H1 (cell line): ENCODE measurements at regions of chr11 and their contacts with region 1.

Region 1: GRCh38 chr11:8832571-8833260 is 78.3 kb upstream of the AKIP1 start:
- DNase-seq: no peak
- H3K4me3 ChIP-seq: no peak overlapping the region
- H3K27ac ChIP-seq: no peak overlapping the region
- H3K4me1 ChIP-seq: peaks cover 6 to 20% (median 13%) of the 10 kb centered on the region in 4 experiments; a peak in 6 of 7 replicates
- H3K27me3 ChIP-seq: no peaks in the 10 kb centered on the region
- CTCF ChIP-seq: no peak
- EP300 ChIP-seq: no peak
- POLR2A ChIP-seq: no peak
- RAD21 ChIP-seq: no peak

Region 2: GRCh38 chr11:8719211-8719649 is 113.5 kb before region 1 on chr11:
- CTCF ChIA-PET with region 1: no interaction called
- POLR2A ChIA-PET with region 1: no interaction called
- DNase-seq: no peak
- H3K4me3 ChIP-seq: no peak overlapping the region
- H3K27ac ChIP-seq: no peak overlapping the region
- H3K4me1 ChIP-seq: peaks cover 0 to 17% (median 9%) of the 10 kb centered on the region in 4 experiments; a peak in 4 of 7 replicates
- H3K27me3 ChIP-seq: no peaks in the 10 kb centered on the region
- CTCF ChIP-seq: no peak
- EP300 ChIP-seq: no peak
- POLR2A ChIP-seq: no peak
- RAD21 ChIP-seq: no peak

Region 3: GRCh38 chr11:8813658-8814057 is 19.1 kb before region 1 on chr11:
- CTCF ChIA-PET with region 1: interaction called, 28 read pairs
- POLR2A ChIA-PET with region 1: no interaction called
- DNase-seq: peak; percentile 77 to 88
- H3K4me3 ChIP-seq: no peak overlapping the region
- H3K27ac ChIP-seq: no peak overlapping the region
- H3K4me1 ChIP-seq: peaks cover 13 to 28% (median 22%) of the 10 kb centered on the region in 4 experiments; a peak in 6 of 7 replicates
- H3K27me3 ChIP-seq: no peaks in the 10 kb centered on the region
- CTCF ChIP-seq: peak; percentile 83 to 95 (median 90)
- EP300 ChIP-seq: no peak
- POLR2A ChIP-seq: no peak
- RAD21 ChIP-seq: peak; percentile 87 to 93